ENCODE measurements at regions of chr21 and their contacts with region 1.

Region 1: GRCh38 chr21:44011980-44012527 is at the start of gene TRAPPC10:
- DNase-seq: peak; percentile 64
- H3K4me3 ChIP-seq: peak within 1 kb of the TSS; percentile 74
- CTCF ChIP-seq: no peak

Region 2: GRCh38 chr21:43842742-43843141 is 169.3 kb before region 1 on chr21:
- in situ Hi-C with region 1: no loop called
- DNase-seq: no peak
- H3K4me3 ChIP-seq: no peak overlapping the region
- CTCF ChIP-seq: no peak

Region 3: DNA sequence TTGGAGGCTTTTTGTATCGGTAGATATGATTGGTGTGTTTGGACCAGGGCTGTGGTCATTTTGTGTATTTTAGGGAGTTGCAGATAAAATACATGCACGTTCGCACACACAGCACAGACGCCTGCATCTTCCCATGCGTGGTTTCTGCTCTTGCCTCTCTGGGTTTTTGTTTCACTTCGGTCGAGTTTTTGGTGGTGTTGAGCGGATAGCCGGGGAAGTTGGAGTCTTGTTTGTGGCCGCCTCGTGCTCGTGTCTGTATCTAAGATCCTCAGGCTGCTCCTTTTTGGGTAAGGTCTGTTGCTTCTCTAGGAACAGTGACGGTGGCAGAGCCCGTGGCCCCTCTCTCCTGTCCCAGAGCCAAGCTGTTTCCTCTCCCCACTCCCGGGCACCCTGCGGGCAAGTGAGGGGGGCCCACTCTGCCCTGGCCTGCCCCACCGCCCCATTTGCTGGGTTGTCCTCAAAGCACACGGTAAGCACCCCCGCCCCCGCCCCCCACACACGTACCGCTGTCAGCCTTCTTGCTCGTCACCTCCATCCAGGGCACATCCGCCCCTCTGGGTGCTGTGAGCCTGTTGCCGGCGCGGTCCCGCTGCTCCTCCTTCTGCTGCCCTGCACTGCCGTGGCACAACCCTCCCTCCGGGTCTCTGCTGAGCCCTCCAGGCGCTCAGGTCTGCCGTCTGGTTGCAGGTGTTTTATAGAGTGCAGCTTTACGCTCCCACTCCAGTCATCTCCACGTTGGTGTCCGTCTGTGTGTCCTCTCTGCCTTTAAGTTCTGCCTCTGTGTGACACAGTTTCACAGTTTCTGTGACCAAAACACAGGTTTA is 95.2 kb before region 1 on chr21:
- in situ Hi-C with region 1: loop called (anchors 5 kb)
- DNase-seq: no peak
- H3K4me3 ChIP-seq: peak overlapping the region; percentile 7
- CTCF ChIP-seq: no peak

Region 4: DNA sequence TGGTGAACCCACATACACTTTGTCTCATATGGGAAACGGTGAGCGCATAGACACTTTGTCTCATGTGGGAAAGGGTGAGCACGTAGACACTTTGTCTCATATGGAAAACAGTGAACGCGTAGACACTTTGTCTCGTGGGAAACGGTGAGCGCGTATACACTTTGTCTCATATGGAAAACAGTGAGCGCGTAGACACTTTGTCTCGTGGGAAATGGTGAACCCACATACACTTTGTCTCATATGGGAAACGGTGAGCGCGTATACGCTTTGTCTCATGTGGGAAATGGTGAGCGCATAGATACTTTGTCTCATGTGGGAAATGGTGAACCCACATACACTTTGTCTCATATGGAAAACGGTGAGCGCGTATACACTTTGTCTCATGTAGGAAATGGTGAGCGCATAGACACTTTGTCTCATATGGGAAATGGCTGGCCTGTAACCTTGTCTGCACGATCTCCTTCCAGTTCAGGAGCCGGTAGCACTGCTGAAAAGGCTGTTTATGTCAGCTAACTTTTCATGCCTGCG is 50.6 kb before region 1 on chr21:
- in situ Hi-C with region 1: no loop called
- DNase-seq: no peak
- H3K4me3 ChIP-seq: no peak overlapping the region
- CTCF ChIP-seq: no peak